MCF 10A (cell line): ENCODE measurements at regions of chr1 and their contacts with region 1.

Region 1: DNA sequence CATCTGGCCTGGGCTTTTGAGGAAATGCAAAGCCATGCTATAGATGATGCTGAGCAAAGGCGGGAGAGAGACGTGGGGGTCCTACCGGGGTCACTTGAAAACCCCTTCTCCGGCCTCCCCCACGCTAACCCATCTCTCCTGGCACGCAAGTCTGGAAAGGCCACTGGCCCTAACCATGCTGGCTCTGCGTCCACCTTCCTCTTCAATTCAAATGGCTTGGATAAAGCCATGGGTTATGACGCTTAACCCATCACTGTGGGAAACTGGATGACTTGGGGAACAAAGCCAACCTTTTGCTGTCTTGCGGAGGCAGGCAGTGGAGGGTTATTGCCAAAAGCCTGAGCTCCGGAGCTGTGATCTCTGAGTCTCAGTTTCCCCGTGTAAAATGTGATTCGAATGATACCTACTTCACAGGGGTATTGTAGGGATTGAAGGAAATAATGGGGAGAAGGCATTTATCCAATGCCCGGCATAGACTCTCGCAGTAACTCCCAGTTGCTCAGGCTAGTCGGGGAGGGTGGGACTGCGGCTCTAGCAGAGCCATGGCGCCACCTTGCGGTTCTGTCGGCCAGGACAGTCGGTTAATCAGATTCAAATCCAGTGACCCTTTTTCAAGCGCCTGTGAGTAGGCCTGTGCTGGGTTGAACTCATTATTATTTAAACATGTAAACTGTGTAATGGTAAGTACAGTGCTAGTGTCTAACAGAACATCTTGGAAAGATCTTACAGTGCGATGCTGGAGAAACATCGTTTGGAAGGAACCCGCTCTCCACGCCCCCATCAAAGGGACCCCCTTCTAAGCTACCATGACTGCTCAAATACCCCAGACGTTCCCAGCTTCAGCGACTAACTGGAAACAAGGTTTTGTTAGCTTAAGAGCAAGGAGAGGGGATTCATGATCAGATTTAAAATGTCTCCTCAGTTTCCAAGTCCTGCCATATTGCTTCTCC is 20.3 kb downstream of the NEK2 start:
- DNase-seq: peak; percentile 95
- H3K4me3 Mint-ChIP-seq: no peak overlapping the region
- H3K27ac Mint-ChIP-seq: no peak overlapping the region
- H3K4me1 Mint-ChIP-seq: peaks cover 26% of the 10 kb centered on the region
- H3K27me3 Mint-ChIP-seq: no peaks in the 10 kb centered on the region
- CTCF ChIP-seq: peak; percentile 100

Region 2: GRCh38 chr1:210407207-210407886 is 1247.8 kb before region 1 on chr1:
- CTCF ChIA-PET with region 1: no interaction called
- POLR2A ChIA-PET with region 1: no interaction called
- intact Hi-C with region 1: loop called (anchors 2 kb)
- DNase-seq: peak; percentile 84
- H3K4me3 Mint-ChIP-seq: no peak overlapping the region
- H3K27ac Mint-ChIP-seq: no peak overlapping the region
- H3K4me1 Mint-ChIP-seq: no peaks in the 10 kb centered on the region
- H3K27me3 Mint-ChIP-seq: no peaks in the 10 kb centered on the region
- CTCF ChIP-seq: peak; percentile 100

Region 3: GRCh38 chr1:211329764-211330201 is 325.3 kb before region 1 on chr1:
- CTCF ChIA-PET with region 1: interaction called, 61 read pairs
- POLR2A ChIA-PET with region 1: interaction called, 3 read pairs
- intact Hi-C with region 1: no loop called
- DNase-seq: no peak
- H3K4me3 Mint-ChIP-seq: no peak overlapping the region
- H3K27ac Mint-ChIP-seq: no peak overlapping the region
- H3K4me1 Mint-ChIP-seq: peaks cover 47% of the 10 kb centered on the region
- H3K27me3 Mint-ChIP-seq: no peaks in the 10 kb centered on the region
- CTCF ChIP-seq: no peak

Region 4: GRCh38 chr1:211520641-211521040 is 134.5 kb before region 1 on chr1:
- CTCF ChIA-PET with region 1: interaction called, 418 read pairs
- POLR2A ChIA-PET with region 1: interaction called, 19 read pairs
- intact Hi-C with region 1: loop called (anchors 1 kb)
- DNase-seq: no peak
- H3K4me3 Mint-ChIP-seq: no peak overlapping the region
- H3K27ac Mint-ChIP-seq: no peak overlapping the region
- H3K4me1 Mint-ChIP-seq: peaks cover 9% of the 10 kb centered on the region
- H3K27me3 Mint-ChIP-seq: no peaks in the 10 kb centered on the region
- CTCF ChIP-seq: no peak

Region 5: GRCh38 chr1:211578640-211579433 is 76.3 kb before region 1 on chr1 and contains the start of gene SLC30A1:
- CTCF ChIA-PET with region 1: interaction called, 62 read pairs
- POLR2A ChIA-PET with region 1: interaction called, 423 read pairs
- intact Hi-C with region 1: loop called (anchors 1 kb)
- DNase-seq: peak; percentile 100
- H3K4me3 Mint-ChIP-seq: peak within 1 kb of the TSS; percentile 89
- H3K27ac Mint-ChIP-seq: peak within 1 kb of the TSS; percentile 96
- H3K4me1 Mint-ChIP-seq: peaks cover 48% of the 10 kb centered on the region
- H3K27me3 Mint-ChIP-seq: no peaks in the 10 kb centered on the region
- CTCF ChIP-seq: no peak
- total RNA-seq, gene SLC30A1: 87.0 and 94.1 TPM in 2 replicates

Region 6: GRCh38 chr1:211632631-211633523 is 22.2 kb before region 1 on chr1:
- CTCF ChIA-PET with region 1: interaction called, 94 read pairs
- POLR2A ChIA-PET with region 1: interaction called, 21 read pairs
- intact Hi-C with region 1: no loop called
- DNase-seq: peak; percentile 98
- H3K4me3 Mint-ChIP-seq: peak overlapping the region; percentile 45
- H3K27ac Mint-ChIP-seq: peak overlapping the region; percentile 84
- H3K4me1 Mint-ChIP-seq: peaks cover 45% of the 10 kb centered on the region
- H3K27me3 Mint-ChIP-seq: no peaks in the 10 kb centered on the region
- CTCF ChIP-seq: no peak

Region 7: GRCh38 chr1:211724687-211725196 is 69.6 kb after region 1 on chr1:
- CTCF ChIA-PET with region 1: no interaction called
- POLR2A ChIA-PET with region 1: no interaction called
- intact Hi-C with region 1: no loop called
- DNase-seq: no peak
- H3K4me3 Mint-ChIP-seq: no peak overlapping the region
- H3K27ac Mint-ChIP-seq: no peak overlapping the region
- H3K4me1 Mint-ChIP-seq: no peaks in the 10 kb centered on the region
- H3K27me3 Mint-ChIP-seq: no peaks in the 10 kb centered on the region
- CTCF ChIP-seq: no peak

Region 8: GRCh38 chr1:211738691-211739301 is 83.7 kb after region 1 on chr1:
- CTCF ChIA-PET with region 1: no interaction called
- POLR2A ChIA-PET with region 1: no interaction called
- intact Hi-C with region 1: no loop called
- DNase-seq: no peak
- H3K4me3 Mint-ChIP-seq: no peak overlapping the region
- H3K27ac Mint-ChIP-seq: no peak overlapping the region
- H3K4me1 Mint-ChIP-seq: peaks cover 46% of the 10 kb centered on the region
- H3K27me3 Mint-ChIP-seq: no peaks in the 10 kb centered on the region
- CTCF ChIP-seq: no peak